Psoas muscle (tissue), 8 donors: ENCODE measurements at regions of chr10 and their contacts with region 1.

Region 1: DNA sequence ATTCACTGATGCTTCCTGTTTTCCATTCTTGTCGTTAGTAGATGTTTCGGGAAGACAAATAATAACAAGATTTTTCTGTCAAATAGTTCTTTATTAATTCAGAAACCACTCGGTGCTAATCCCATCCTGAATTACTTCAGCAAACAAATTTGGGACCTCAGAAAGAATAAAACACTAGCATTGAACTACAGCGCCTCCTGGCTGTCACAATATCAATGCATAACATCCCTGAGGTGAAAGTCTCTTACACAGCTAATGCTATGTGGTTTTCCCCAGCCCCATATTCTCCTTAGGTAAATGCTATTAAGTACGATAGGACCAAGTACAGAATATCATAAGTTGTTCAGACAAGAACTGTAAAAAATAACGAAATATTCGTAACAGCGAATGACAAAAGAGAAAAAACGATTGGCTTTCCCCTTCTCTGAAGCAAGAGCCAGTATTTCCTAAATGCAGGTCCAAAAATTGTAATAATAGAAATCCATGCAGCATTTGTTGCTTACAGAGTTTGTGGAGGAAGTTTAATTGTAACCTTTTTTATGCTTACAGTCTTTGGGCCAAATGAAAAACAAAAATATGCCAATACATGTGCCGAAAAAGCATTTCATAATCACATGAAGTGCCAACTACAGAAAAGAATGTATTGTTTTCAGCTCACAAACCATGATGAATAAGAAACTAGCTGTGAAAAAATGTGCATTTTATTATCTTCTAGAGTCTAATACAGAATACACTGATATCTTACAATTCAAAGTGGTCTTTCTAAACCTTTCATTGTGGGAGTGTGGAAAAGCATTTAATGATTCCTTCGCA is 47.3 kb downstream of the MYPN start:
- DNase-seq: no peak
- ATAC-seq: peak in 1 of 4 donors; percentile 16
- H3K4me3 ChIP-seq: no peak overlapping the region
- H3K27ac ChIP-seq: peak overlapping the region; percentile 85
- H3K4me1 ChIP-seq: peaks cover 44% of the 10 kb centered on the region
- H3K27me3 ChIP-seq: no peaks in the 10 kb centered on the region
- CTCF ChIP-seq: peak; percentile 75

Region 2: GRCh38 chr10:67858971-67859370 is 297.6 kb before region 1 on chr10:
- intact Hi-C with region 1: loop called (anchors 5 to 10 kb)
- DNase-seq: no peak
- ATAC-seq: no peak
- H3K4me3 ChIP-seq: no peak overlapping the region
- H3K27ac ChIP-seq: no peak overlapping the region
- H3K4me1 ChIP-seq: no peaks in the 10 kb centered on the region
- H3K27me3 ChIP-seq: no peaks in the 10 kb centered on the region
- CTCF ChIP-seq: no peak

Region 3: DNA sequence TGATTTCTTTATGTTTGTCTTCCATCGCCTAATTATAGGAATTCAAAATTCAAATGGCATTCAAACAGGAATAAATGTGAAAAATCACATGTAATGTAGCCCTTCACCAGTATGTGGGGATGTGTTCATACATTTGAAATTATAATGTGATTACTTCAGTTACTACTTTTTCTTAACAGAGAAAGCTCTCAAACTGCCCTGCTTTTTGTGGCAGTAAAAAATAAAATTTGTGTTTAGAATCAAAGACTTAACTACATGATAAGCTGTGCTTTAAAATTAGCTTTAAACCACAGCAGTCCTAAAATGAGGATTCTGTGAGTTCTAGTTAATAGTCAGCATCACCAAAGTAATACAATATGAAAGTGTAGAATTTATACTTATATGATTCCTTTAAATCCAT is 73.7 kb before region 1 on chr10:
- intact Hi-C with region 1: loop called (anchors 2 to 5 kb)
- DNase-seq: no peak
- ATAC-seq: peak in 2 of 4 donors; percentile 52 to 63
- H3K4me3 ChIP-seq: no peak overlapping the region
- H3K27ac ChIP-seq: peak overlapping the region; percentile 38
- H3K4me1 ChIP-seq: peaks cover 31% of the 10 kb centered on the region
- H3K27me3 ChIP-seq: no peaks in the 10 kb centered on the region
- CTCF ChIP-seq: peak; percentile 56

Region 4: GRCh38 chr10:68088744-68089143 is 67.8 kb before region 1 on chr10:
- intact Hi-C with region 1: loop called (anchors 2 to 5 kb)
- DNase-seq: no peak
- ATAC-seq: peak in 1 of 4 donors; percentile 20
- H3K4me3 ChIP-seq: peak overlapping the region; percentile 69
- H3K27ac ChIP-seq: peak overlapping the region; percentile 93
- H3K4me1 ChIP-seq: peaks cover 32% of the 10 kb centered on the region
- H3K27me3 ChIP-seq: no peaks in the 10 kb centered on the region
- CTCF ChIP-seq: no peak

Region 5: DNA sequence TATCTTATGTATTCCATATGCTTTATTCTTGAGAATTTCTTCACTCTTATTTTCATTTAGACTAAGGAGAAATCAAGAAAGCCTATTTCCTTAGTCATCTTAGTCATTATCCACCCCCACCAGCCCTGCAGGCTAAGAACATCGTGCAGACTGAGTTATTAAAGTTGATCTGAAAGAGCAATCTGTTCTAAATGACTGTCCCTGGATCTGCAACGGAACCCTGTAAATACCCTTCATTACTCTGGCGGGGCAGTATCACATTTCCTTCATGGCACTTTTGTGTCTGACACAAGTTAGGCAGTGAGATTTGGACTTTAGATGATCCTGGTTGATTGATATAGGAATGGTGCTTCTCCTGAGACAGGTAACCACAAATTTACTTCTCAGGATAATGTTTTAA is 50.8 kb before region 1 on chr10:
- intact Hi-C with region 1: loop called in 1 of 2 experiments (anchors 2 kb)
- DNase-seq: peak in 1 of 2 donors; percentile 60
- ATAC-seq: peak; percentile 63 to 75 (median 73)
- H3K4me3 ChIP-seq: peak overlapping the region; percentile 75
- H3K27ac ChIP-seq: peak overlapping the region; percentile 85
- H3K4me1 ChIP-seq: peaks cover 26% of the 10 kb centered on the region
- H3K27me3 ChIP-seq: no peaks in the 10 kb centered on the region
- CTCF ChIP-seq: no peak